Cardiac septum (tissue), 1 donor: ENCODE measurements at regions of chr20 and their contacts with region 1.

Region 1: GRCh38 chr20:19784511-19785172 is 26.6 kb downstream of the RIN2 start:
- DNase-seq: peak; percentile 82

Region 2: DNA sequence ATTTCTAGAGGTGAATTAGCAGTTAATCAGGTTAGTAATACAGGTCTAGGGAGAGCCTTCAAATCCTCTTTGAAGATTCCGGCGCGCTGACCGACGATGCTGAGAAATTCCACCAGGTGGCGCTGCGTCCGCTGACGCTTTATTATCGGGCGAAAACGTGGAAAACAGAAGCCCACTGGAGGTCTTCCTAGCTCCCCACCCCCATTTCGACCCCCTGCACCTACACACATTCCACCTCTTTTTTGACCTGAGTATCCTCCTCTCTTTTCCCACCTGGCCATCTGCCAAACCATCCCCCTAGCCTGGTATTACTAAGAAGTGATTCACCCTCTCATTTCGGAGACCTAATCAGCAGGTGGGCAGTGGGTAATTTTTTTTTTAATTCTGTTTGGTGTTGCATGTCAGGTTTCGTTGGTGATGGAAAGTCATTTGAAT is 91.9 kb before region 1 on chr20:
- intact Hi-C with region 1: loop called (anchors 5 kb)
- DNase-seq: peak; percentile 81

Region 3: DNA sequence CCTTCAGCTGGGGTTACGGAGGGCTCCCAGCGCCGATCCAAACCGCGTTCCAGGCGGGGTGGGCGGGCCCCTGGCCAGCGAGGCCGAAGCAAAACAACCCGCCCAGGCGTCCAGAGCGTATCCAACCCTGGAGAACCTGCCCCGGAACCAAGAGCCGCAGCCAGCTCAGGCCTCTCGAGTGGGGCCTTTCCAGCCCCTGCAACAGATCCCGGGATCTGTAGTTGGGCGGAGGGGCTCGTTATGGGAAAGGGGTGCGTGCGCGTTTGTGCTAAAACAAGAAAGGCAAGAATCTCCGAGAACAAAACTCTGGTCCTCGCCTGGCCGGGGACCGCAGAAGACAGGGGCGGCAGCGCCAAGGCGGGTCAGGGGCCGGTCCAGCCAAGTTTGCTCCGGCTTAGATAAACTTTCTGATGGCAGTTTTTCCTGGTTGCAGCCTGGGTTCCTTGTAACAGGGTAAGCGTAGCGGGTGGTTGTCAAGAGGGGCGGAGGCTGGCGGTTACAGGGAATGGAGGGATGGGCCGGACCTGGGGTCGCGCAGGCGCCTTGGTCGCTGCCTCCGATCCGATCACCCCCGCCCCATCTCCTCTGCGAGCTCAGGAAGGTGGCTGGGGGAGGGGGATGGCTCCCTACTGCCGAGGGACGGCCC is 27.0 kb before region 1 on chr20:
- intact Hi-C with region 1: loop called (anchors 2 kb)
- DNase-seq: peak; percentile 94

Region 4: GRCh38 chr20:19830211-19830785 is 45.7 kb after region 1 on chr20:
- intact Hi-C with region 1: loop called (anchors 5 kb)
- DNase-seq: no peak

Region 5: DNA sequence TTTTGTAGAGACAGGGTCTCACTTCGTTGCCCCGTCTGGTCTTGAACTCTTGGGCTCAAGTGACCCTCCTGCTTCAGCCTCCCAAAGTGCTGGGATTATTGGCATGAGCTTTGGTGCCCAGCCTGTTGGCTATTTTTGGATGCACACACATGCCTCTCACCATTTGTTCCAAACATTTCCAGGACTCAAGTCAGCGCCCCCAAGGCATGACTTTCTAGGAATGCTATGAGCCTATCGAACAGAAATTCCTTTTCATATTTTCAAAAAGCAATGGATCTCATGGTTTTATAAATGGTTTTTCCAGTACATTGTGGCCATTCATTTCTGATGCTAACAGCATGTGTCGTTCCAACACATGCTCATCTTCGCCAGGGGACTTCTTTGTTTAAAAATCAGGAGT is 113.2 kb after region 1 on chr20:
- intact Hi-C with region 1: no loop called
- DNase-seq: no peak

Region 6: GRCh38 chr20:19974626-19975435 is 190.2 kb after region 1 on chr20:
- intact Hi-C with region 1: loop called (anchors 2 kb)
- DNase-seq: peak; percentile 92

Region 7: GRCh38 chr20:20003031-20003954 is 218.7 kb after region 1 on chr20:
- intact Hi-C with region 1: loop called (anchors 5 kb)
- DNase-seq: no peak